Activated naive CD4-positive, alpha-beta T cell treated with anti-CD3 and anti-CD28 coated beads, Interleukin-2, amount 10 ng/mL, durations not matched to agents 7 days and 5 days (primary cell): ENCODE measurements at regions of chr5 and their contacts with region 1.

Region 1: GRCh38 chr5:112757468-112758208 is 20.0 kb downstream of the APC start:
- DNase-seq: no peak
- H3K4me3 Mint-ChIP-seq: no peak overlapping the region
- H3K27ac Mint-ChIP-seq: peak overlapping the region; percentile 20
- H3K4me1 Mint-ChIP-seq: no peaks in the 10 kb centered on the region
- H3K27me3 Mint-ChIP-seq: no peaks in the 10 kb centered on the region

Region 2: GRCh38 chr5:112551419-112552032 is 206.1 kb before region 1 on chr5:
- CTCF ChIA-PET with region 1: interaction called, 65 read pairs
- DNase-seq: peak; percentile 46
- H3K4me3 Mint-ChIP-seq: no peak overlapping the region
- H3K27ac Mint-ChIP-seq: no peak overlapping the region
- H3K4me1 Mint-ChIP-seq: no peaks in the 10 kb centered on the region
- H3K27me3 Mint-ChIP-seq: peaks cover 14% of the 10 kb centered on the region

Region 3: DNA sequence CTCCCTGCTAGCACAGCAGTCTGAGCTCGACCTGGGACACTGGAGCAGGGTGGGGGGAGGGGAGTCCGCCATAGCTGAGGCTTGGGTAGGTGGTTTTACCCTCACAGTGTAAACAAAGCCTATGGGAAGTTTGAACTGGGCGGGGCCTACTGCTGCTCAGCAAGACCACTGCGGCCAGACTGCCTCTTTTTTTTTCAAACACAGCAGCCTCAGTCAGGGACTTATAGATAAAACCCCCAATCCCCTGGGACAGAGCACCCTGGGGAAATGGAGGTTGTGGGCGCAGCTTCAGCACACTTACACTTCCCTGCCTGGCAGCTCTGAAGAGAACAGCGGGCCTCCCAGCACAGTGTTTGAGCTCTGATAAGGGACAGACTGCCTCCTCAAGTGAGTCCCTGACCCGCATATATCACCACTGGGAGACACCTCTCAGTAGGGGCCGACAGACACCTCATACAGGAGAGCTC is 171.0 kb before region 1 on chr5:
- CTCF ChIA-PET with region 1: no interaction called
- DNase-seq: no peak
- H3K4me3 Mint-ChIP-seq: no peak overlapping the region
- H3K27ac Mint-ChIP-seq: no peak overlapping the region
- H3K4me1 Mint-ChIP-seq: no peaks in the 10 kb centered on the region
- H3K27me3 Mint-ChIP-seq: peaks cover 9% of the 10 kb centered on the region

Region 4: GRCh38 chr5:112691758-112692157 is 65.9 kb before region 1 on chr5:
- CTCF ChIA-PET with region 1: interaction called, 50 read pairs
- DNase-seq: peak; percentile 57
- H3K4me3 Mint-ChIP-seq: no peak overlapping the region
- H3K27ac Mint-ChIP-seq: no peak overlapping the region
- H3K4me1 Mint-ChIP-seq: no peaks in the 10 kb centered on the region
- H3K27me3 Mint-ChIP-seq: peaks cover 48% of the 10 kb centered on the region

Region 5: GRCh38 chr5:112729630-112730029 is 28.0 kb before region 1 on chr5:
- CTCF ChIA-PET with region 1: no interaction called
- DNase-seq: no peak
- H3K4me3 Mint-ChIP-seq: no peak overlapping the region
- H3K27ac Mint-ChIP-seq: no peak overlapping the region
- H3K4me1 Mint-ChIP-seq: no peaks in the 10 kb centered on the region
- H3K27me3 Mint-ChIP-seq: no peaks in the 10 kb centered on the region

Region 6: GRCh38 chr5:112848116-112848811 is 90.6 kb after region 1 on chr5:
- CTCF ChIA-PET with region 1: no interaction called
- DNase-seq: no peak
- H3K4me3 Mint-ChIP-seq: no peak overlapping the region
- H3K27ac Mint-ChIP-seq: no peak overlapping the region
- H3K4me1 Mint-ChIP-seq: peaks cover 4% of the 10 kb centered on the region
- H3K27me3 Mint-ChIP-seq: peaks cover 25% of the 10 kb centered on the region

Region 7: GRCh38 chr5:113050721-113051382 is 293.2 kb after region 1 on chr5:
- CTCF ChIA-PET with region 1: no interaction called
- DNase-seq: no peak
- H3K4me3 Mint-ChIP-seq: no peak overlapping the region
- H3K27ac Mint-ChIP-seq: peak overlapping the region; percentile 16
- H3K4me1 Mint-ChIP-seq: peaks cover 13% of the 10 kb centered on the region
- H3K27me3 Mint-ChIP-seq: peaks cover 10% of the 10 kb centered on the region